CD4-positive, alpha-beta memory T cell (primary cell): ENCODE measurements at regions of chr22 and their contacts with region 1.

Region 1: GRCh38 chr22:44455151-44455962 is 42.7 kb downstream of the RTL6 start:
- DNase-seq: peak; percentile 77 to 87 (median 84)
- H3K4me3 ChIP-seq: peak overlapping the region; percentile 4 to 7
- H3K4me3 Mint-ChIP-seq: peak overlapping the region; percentile 49 to 90 (median 80)
- H3K27ac ChIP-seq: peak overlapping the region; percentile 60
- H3K27ac Mint-ChIP-seq: peak overlapping the region; percentile 87 to 99 (median 98)
- H3K4me1 ChIP-seq: peaks cover 50% of the 10 kb centered on the region
- H3K4me1 Mint-ChIP-seq: peaks cover 25 to 52% (median 36%) of the 10 kb centered on the region in 4 donors
- H3K27me3 ChIP-seq: no peaks in the 10 kb centered on the region
- H3K27me3 Mint-ChIP-seq: no peaks in the 10 kb centered on the region

Region 2: DNA sequence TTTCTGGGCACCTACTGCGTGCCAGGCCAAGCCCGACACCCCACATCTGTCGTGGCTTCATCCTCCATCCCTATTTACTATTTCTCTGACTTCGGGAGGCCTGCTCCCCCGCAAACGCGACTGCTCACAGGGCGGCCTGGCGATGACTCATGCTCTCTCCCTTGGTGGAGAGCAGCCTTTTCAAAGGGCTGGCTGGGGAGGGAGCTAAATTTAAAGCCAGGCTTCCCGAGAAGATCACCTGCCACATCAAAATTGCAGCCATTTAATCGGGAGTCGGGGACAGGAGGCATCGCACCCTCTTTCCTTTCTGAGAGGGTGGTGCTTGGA is 117.7 kb before region 1 on chr22:
- CTCF ChIA-PET with region 1: no interaction called
- POLR2A ChIA-PET with region 1: no interaction called
- intact Hi-C with region 1: no loop called
- DNase-seq: no peak
- H3K4me3 ChIP-seq: no peak overlapping the region
- H3K4me3 Mint-ChIP-seq: no peak overlapping the region
- H3K27ac ChIP-seq: no peak overlapping the region
- H3K27ac Mint-ChIP-seq: no peak overlapping the region
- H3K4me1 ChIP-seq: no peaks in the 10 kb centered on the region
- H3K4me1 Mint-ChIP-seq: no peaks in the 10 kb centered on the region
- H3K27me3 ChIP-seq: peaks cover 8% of the 10 kb centered on the region
- H3K27me3 Mint-ChIP-seq: peaks cover 3% of the 10 kb centered on the region in 2 donors

Region 3: GRCh38 chr22:44431256-44431655 is 24.1 kb before region 1 on chr22:
- CTCF ChIA-PET with region 1: no interaction called
- POLR2A ChIA-PET with region 1: no interaction called
- intact Hi-C with region 1: no loop called
- DNase-seq: no peak
- H3K4me3 ChIP-seq: no peak overlapping the region
- H3K4me3 Mint-ChIP-seq: no peak overlapping the region
- H3K27ac ChIP-seq: no peak overlapping the region
- H3K27ac Mint-ChIP-seq: peak overlapping the region in 1 of 7 donors; percentile 37
- H3K4me1 ChIP-seq: no peaks in the 10 kb centered on the region
- H3K4me1 Mint-ChIP-seq: no peaks in the 10 kb centered on the region
- H3K27me3 ChIP-seq: no peaks in the 10 kb centered on the region
- H3K27me3 Mint-ChIP-seq: peaks cover 0 to 2% of the 10 kb centered on the region in 2 donors

Region 4: GRCh38 chr22:44497218-44497904 is 42.0 kb after region 1 on chr22:
- CTCF ChIA-PET with region 1: interaction called, 3 read pairs
- POLR2A ChIA-PET with region 1: interaction called, 9 read pairs
- intact Hi-C with region 1: loop called (anchors 1 kb)
- DNase-seq: peak in 2 of 5 donors; percentile 9 to 46
- H3K4me3 ChIP-seq: peak overlapping the region in 1 of 2 donors; percentile 45
- H3K4me3 Mint-ChIP-seq: peak overlapping the region; percentile 52 to 84 (median 78)
- H3K27ac ChIP-seq: peak overlapping the region; percentile 73
- H3K27ac Mint-ChIP-seq: peak overlapping the region; percentile 82 to 91 (median 89)
- H3K4me1 ChIP-seq: peaks cover 56% of the 10 kb centered on the region
- H3K4me1 Mint-ChIP-seq: peaks cover 23 to 61% (median 42%) of the 10 kb centered on the region in 4 donors
- H3K27me3 ChIP-seq: no peaks in the 10 kb centered on the region
- H3K27me3 Mint-ChIP-seq: no peaks in the 10 kb centered on the region

Region 5: GRCh38 chr22:44567846-44568493 is 112.6 kb after region 1 on chr22:
- CTCF ChIA-PET with region 1: interaction called, 13 read pairs
- POLR2A ChIA-PET with region 1: interaction called, 4 read pairs
- intact Hi-C with region 1: loop called (anchors 1 kb)
- DNase-seq: peak in 4 of 5 donors; percentile 30 to 39 (median 34)
- H3K4me3 ChIP-seq: no peak overlapping the region
- H3K4me3 Mint-ChIP-seq: no peak overlapping the region
- H3K27ac ChIP-seq: no peak overlapping the region
- H3K27ac Mint-ChIP-seq: no peak overlapping the region
- H3K4me1 ChIP-seq: no peaks in the 10 kb centered on the region
- H3K4me1 Mint-ChIP-seq: no peaks in the 10 kb centered on the region
- H3K27me3 ChIP-seq: no peaks in the 10 kb centered on the region
- H3K27me3 Mint-ChIP-seq: peaks cover 9 to 10% of the 10 kb centered on the region in 2 donors

Region 6: DNA sequence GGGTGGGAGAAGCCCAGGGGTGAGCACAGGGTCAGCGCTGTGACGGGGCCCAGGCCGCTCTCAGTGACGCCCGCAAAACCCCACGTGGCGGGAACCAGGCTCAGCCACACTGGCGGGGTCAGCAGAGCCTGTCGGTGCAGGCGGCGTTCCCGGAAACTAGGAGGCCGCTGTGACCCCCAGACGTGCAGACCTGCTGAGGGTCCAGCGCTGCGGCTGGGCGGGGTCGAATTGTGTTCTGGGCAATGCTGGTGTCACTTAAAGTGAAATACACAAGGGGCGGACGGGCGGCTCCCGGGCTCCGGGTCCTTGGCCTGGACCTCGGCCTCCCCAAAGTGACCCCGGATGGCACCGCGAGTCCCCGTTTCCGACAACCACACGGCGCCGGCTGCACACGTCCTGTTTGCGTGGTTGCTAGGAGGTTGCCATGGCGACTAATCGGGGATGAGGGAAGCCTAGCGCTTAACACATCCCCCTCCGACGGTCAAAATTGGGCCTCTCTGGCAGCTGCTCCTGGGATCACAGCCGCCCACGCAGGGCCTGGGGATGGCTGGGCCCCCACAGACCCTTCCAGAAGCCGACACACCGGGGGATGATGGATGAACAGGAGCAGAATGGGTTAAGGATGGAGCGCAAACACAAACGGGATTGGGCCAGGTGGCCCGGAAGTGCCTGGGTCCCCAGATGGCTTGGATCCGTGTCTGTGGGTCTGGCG is 164.9 kb after region 1 on chr22:
- CTCF ChIA-PET with region 1: interaction called, 3 read pairs
- POLR2A ChIA-PET with region 1: no interaction called
- intact Hi-C with region 1: loop called (anchors 1 kb)
- DNase-seq: peak; percentile 85 to 92 (median 91)
- H3K4me3 ChIP-seq: peak overlapping the region in 1 of 2 donors; percentile 7
- H3K4me3 Mint-ChIP-seq: peak overlapping the region in 1 of 8 donors; percentile 67
- H3K27ac ChIP-seq: peak overlapping the region; percentile 14
- H3K27ac Mint-ChIP-seq: peak overlapping the region in 1 of 7 donors; percentile 96
- H3K4me1 ChIP-seq: peaks cover 15% of the 10 kb centered on the region
- H3K4me1 Mint-ChIP-seq: peaks cover 4 to 11% (median 6%) of the 10 kb centered on the region in 4 donors
- H3K27me3 ChIP-seq: no peaks in the 10 kb centered on the region
- H3K27me3 Mint-ChIP-seq: no peaks in the 10 kb centered on the region